T-cell (primary cell): ENCODE measurements at regions of chr12 and their contacts with region 1.

Region 1: DNA sequence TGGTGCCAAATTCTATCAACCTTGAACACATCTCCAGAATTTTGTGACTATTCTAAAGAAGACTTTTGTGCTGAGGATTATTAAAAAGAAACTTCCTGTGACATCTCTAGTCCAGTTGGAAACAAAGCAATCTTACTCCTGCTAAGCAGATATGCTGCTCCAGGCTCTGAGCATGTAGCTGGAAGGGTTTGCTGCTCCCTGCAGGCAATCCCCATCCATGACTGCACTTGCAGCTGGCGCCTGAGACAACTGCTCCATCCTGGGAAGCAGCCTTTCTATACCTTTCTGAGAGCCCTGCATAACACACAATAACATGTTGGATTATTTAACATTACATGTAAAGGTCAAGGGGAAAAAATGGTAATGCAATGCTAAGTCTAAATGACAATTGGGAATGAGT is 105.1 kb downstream of the NDUFA12 start:
- DNase-seq: no peak
- ATAC-seq: no peak
- H3K4me3 ChIP-seq: no peak overlapping the region
- H3K4me3 Mint-ChIP-seq: no peak overlapping the region
- H3K27ac ChIP-seq: no peak overlapping the region
- H3K27ac Mint-ChIP-seq: no peak overlapping the region
- H3K4me1 ChIP-seq: no peaks in the 10 kb centered on the region
- H3K4me1 Mint-ChIP-seq: no peaks in the 10 kb centered on the region
- H3K27me3 ChIP-seq: peaks cover 0 to 2% of the 10 kb centered on the region in 2 experiments
- H3K27me3 Mint-ChIP-seq: no peaks in the 10 kb centered on the region

Region 2: DNA sequence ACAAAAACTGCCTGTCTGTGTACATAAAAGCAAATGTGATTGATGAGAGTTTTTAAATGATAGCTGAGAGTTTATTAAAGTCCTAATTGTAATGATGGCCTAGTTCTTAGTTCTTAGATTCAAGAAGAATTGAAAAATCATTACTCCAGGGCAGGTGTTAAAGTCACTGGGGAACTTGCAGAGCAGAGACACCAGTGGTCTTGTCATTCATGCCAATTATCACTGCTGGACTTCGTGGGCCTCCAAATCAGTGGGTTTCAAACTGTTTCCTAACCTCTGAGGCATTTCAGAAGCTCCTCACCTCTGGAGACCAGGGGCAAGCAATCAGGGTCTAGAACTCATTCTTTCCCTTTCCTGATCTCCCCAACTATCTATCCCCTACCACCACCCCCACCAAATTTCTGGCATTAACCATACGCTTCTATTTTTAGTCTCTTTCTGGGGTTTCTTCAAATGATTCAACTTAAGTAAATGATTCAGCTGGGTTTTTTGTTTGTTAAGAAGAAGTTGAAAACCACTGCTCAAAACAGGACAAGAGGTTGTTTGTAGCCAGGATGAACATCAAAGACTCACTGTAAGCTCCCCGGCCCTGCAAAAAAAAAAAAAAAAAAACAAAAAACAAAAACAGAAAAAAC is 518.8 kb before region 1 on chr12:
- CTCF ChIA-PET with region 1: no interaction called
- POLR2A ChIA-PET with region 1: interaction called in 1 of 2 experiments, 11 read pairs
- DNase-seq: no peak
- ATAC-seq: no peak
- H3K4me3 ChIP-seq: no peak overlapping the region
- H3K4me3 Mint-ChIP-seq: no peak overlapping the region
- H3K27ac ChIP-seq: no peak overlapping the region
- H3K27ac Mint-ChIP-seq: no peak overlapping the region
- H3K4me1 ChIP-seq: no peaks in the 10 kb centered on the region
- H3K4me1 Mint-ChIP-seq: peaks cover 0 to 5% (median 0%) of the 10 kb centered on the region in 3 donors
- H3K27me3 ChIP-seq: no peaks in the 10 kb centered on the region
- H3K27me3 Mint-ChIP-seq: no peaks in the 10 kb centered on the region

Region 3: GRCh38 chr12:94930216-94930654 is 31.8 kb after region 1 on chr12:
- CTCF ChIA-PET with region 1: no interaction called
- POLR2A ChIA-PET with region 1: no interaction called
- DNase-seq: no peak
- ATAC-seq: no peak
- H3K4me3 ChIP-seq: no peak overlapping the region
- H3K4me3 Mint-ChIP-seq: no peak overlapping the region
- H3K27ac ChIP-seq: no peak overlapping the region
- H3K27ac Mint-ChIP-seq: no peak overlapping the region
- H3K4me1 ChIP-seq: no peaks in the 10 kb centered on the region
- H3K4me1 Mint-ChIP-seq: peaks cover 0 to 2% (median 0%) of the 10 kb centered on the region in 3 donors
- H3K27me3 ChIP-seq: no peaks in the 10 kb centered on the region
- H3K27me3 Mint-ChIP-seq: no peaks in the 10 kb centered on the region